Common myeloid progenitor, CD34-positive (primary cell): ENCODE measurements at regions of chr17 and their contacts with region 1.

Region 1: DNA sequence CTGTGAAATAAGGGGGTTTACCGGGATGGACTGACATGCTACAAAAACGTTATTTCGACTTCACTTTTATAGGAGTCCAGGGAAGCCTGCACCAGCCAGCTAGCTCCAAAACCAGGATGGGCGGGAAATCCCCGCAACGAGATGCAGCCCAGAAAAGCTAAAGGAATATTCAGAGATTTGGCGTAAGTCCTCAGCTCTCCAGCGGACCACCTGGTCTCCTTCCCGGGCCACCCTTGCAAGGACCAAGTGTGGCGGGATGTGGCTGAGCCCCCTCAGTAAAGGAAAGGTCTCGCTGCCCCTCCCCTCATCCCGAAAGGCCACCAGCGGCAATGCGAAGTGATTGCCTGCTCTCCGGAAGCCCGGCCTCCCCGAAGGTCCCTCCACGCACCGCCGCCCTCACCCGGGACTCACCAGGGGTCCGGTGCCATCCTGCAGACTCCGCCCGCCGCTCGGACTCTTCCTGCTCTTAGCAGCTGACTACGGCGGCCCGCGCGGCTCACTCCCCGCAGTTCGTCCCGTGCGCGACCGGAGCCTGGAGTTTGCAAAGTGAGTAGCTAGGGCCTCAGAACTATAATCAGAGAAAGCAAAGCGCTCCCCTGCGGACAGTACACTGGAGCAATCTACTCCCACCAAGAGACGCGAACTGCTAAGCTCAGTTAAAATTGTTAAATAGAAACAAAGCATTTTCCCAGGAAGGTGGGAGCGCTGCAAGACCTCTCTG is at the start of gene STX8:
- DNase-seq: peak; percentile 76 to 85 (median 78)
- H3K4me3 ChIP-seq: peak within 1 kb of the TSS; percentile 78 to 97 (median 93)
- H3K27ac ChIP-seq: peak within 1 kb of the TSS in 1 of 2 experiments; percentile 58
- H3K4me1 ChIP-seq: peaks cover 10 to 23% (median 16%) of the 10 kb centered on the region in 4 experiments
- H3K27me3 ChIP-seq: no peaks in the 10 kb centered on the region

Region 2: GRCh38 chr17:9512323-9513168 is 63.0 kb before region 1 on chr17:
- CTCF ChIA-PET with region 1: no interaction called
- POLR2A ChIA-PET with region 1: no interaction called
- DNase-seq: no peak
- H3K4me3 ChIP-seq: no peak overlapping the region
- H3K27ac ChIP-seq: no peak overlapping the region
- H3K4me1 ChIP-seq: no peaks in the 10 kb centered on the region
- H3K27me3 ChIP-seq: no peaks in the 10 kb centered on the region

Region 3: DNA sequence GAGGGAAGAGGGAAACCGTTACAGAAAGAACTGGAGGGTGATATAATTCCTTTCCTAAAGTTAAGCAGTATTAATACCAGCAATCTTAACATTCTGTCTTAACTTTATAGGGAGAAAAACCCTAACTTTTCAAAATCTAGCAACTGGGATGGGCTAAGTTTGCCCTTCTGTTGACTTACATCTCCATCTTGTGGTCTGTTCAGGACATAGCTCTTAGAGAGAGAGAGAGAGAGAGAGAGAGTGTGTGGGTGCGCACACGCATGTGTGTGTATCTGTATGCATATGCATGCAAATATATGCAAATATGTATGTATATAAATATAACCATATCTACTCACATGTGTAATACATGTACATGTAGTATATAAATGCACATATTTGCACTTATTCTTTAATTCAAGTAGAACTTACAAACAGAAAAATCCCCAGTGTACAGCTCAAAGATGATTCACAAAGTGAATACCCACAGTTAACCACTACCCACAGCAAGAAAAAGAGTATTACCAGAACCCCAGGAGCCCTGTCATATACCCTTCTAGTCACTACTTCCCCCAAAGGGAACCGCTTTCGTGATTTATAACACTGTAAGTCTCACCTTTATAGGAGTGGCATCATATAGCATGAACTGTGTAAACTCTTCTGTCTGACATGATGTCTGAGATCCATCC is 46.4 kb before region 1 on chr17:
- CTCF ChIA-PET with region 1: no interaction called
- POLR2A ChIA-PET with region 1: no interaction called
- DNase-seq: peak; percentile 15 to 54 (median 47)
- H3K4me3 ChIP-seq: no peak overlapping the region
- H3K27ac ChIP-seq: no peak overlapping the region
- H3K4me1 ChIP-seq: no peaks in the 10 kb centered on the region
- H3K27me3 ChIP-seq: no peaks in the 10 kb centered on the region

Region 4: GRCh38 chr17:9587969-9588656 is 12.6 kb after region 1 on chr17:
- CTCF ChIA-PET with region 1: interaction called, 29 read pairs
- POLR2A ChIA-PET with region 1: no interaction called
- DNase-seq: no peak
- H3K4me3 ChIP-seq: no peak overlapping the region
- H3K27ac ChIP-seq: no peak overlapping the region
- H3K4me1 ChIP-seq: no peaks in the 10 kb centered on the region
- H3K27me3 ChIP-seq: no peaks in the 10 kb centered on the region

Region 5: GRCh38 chr17:9676742-9677387 is 101.3 kb after region 1 on chr17:
- CTCF ChIA-PET with region 1: interaction called, 20 read pairs
- POLR2A ChIA-PET with region 1: no interaction called
- DNase-seq: no peak
- H3K4me3 ChIP-seq: no peak overlapping the region
- H3K27ac ChIP-seq: no peak overlapping the region
- H3K4me1 ChIP-seq: no peaks in the 10 kb centered on the region
- H3K27me3 ChIP-seq: no peaks in the 10 kb centered on the region

Region 6: GRCh38 chr17:9725575-9725974 is 150.0 kb after region 1 on chr17:
- CTCF ChIA-PET with region 1: interaction called, 10 read pairs
- POLR2A ChIA-PET with region 1: no interaction called
- DNase-seq: peak in 2 of 3 donors; percentile 11 to 14
- H3K4me3 ChIP-seq: no peak overlapping the region
- H3K27ac ChIP-seq: no peak overlapping the region
- H3K4me1 ChIP-seq: peaks cover 2 to 10% (median 8%) of the 10 kb centered on the region in 4 experiments
- H3K27me3 ChIP-seq: no peaks in the 10 kb centered on the region